Left ventricle myocardium inferior (tissue), 1 donor: ENCODE measurements at regions of chr10 and their contacts with region 1.

Region 1: GRCh38 chr10:132223156-132223590 is 36.4 kb downstream of the DPYSL4 start:
- DNase-seq: peak; percentile 78
- H3K4me3 ChIP-seq: no peak overlapping the region
- H3K27ac ChIP-seq: no peak overlapping the region
- H3K4me1 ChIP-seq: no peaks in the 10 kb centered on the region
- H3K27me3 ChIP-seq: no peaks in the 10 kb centered on the region
- CTCF ChIP-seq: peak; percentile 96

Region 2: GRCh38 chr10:132096223-132096622 is 127.0 kb before region 1 on chr10:
- intact Hi-C with region 1: no loop called
- DNase-seq: no peak
- H3K4me3 ChIP-seq: no peak overlapping the region
- H3K27ac ChIP-seq: peak overlapping the region; percentile 23
- H3K4me1 ChIP-seq: peaks cover 11% of the 10 kb centered on the region
- H3K27me3 ChIP-seq: no peaks in the 10 kb centered on the region
- CTCF ChIP-seq: no peak

Region 3: DNA sequence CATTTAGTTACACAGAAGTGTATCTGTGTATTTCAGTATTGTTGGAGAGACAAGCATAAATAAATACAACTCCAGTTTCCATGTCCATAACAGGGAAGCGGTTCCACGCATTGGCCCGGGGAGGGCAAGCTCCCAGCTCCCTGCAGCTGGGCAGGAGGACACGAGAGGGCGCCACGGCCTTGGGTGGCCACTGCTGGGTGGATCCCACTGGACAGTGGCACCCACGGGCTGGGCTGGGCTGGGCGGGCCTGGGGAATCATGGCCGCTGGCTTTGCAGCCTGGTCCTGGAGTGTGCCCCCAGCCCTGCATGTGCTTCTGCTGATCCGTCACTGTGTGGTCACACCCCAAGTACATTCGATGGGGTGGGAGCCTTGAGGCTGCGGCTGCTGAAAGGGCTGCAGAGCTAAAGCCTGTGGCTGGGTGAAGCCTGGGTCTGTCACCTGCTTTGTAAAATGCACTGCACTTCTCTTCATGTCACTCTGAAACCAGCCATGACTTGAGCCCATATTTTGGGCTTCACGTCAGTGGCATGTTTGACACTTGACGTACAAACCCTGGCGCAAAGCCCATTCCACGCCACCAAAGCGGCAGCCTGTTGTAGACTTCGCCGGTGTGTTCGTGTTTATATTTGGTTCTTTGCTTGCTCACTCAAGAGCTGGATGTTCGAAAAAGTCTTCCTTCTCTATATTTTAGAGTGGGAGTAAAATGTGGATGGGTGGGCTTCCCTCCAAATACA is 136.3 kb after region 1 on chr10:
- intact Hi-C with region 1: loop called (anchors 5 kb)
- DNase-seq: peak; percentile 62
- H3K4me3 ChIP-seq: no peak overlapping the region
- H3K27ac ChIP-seq: peak overlapping the region; percentile 69
- H3K4me1 ChIP-seq: peaks cover 10% of the 10 kb centered on the region
- H3K27me3 ChIP-seq: no peaks in the 10 kb centered on the region
- CTCF ChIP-seq: peak; percentile 39